GM23248 (cell line): ENCODE measurements at regions of chr14 and their contacts with region 1.

Region 1: GRCh38 chr14:51219473-51220448 is 20.3 kb upstream of the TMX1 start:
- DNase-seq: peak; percentile 70
- H3K4me3 ChIP-seq: no peak overlapping the region
- H3K27ac ChIP-seq: no peak overlapping the region
- H3K4me1 ChIP-seq: peaks cover 8% of the 10 kb centered on the region
- H3K27me3 ChIP-seq: 0 out of 2 replicates have a peak, but pooled peaks cover 7% of the 10 kb centered on the region

Region 2: GRCh38 chr14:50619556-50620141 is 600.1 kb before region 1 on chr14:
- in situ Hi-C with region 1: loop called (anchors 25 kb)
- DNase-seq: peak; percentile 60
- H3K4me3 ChIP-seq: no peak overlapping the region
- H3K27ac ChIP-seq: no peak overlapping the region
- H3K4me1 ChIP-seq: no peaks in the 10 kb centered on the region
- H3K27me3 ChIP-seq: no peaks in the 10 kb centered on the region

Region 3: DNA sequence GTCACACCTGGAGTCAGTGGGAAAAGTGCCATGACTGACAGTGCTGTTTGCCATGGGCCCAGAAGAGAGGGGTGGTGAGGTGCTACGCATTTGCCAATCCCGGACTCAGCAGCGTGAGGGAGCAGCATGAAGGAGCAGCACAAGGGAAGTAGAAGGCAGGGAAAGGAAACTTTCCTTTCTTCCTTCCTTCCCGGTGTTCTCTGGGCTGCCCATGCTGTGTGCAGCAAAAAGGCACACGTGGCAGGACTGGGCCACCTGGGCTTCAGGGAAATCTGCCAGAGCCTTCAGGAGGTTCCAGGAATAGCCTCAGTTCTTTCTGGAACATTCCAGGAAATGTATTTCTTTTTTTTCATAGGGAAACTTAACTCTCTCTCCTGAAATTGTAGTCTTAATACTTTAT is 147.9 kb before region 1 on chr14:
- in situ Hi-C with region 1: no loop called
- DNase-seq: no peak
- H3K4me3 ChIP-seq: no peak overlapping the region
- H3K27ac ChIP-seq: no peak overlapping the region
- H3K4me1 ChIP-seq: peaks cover 6% of the 10 kb centered on the region; the same call in 1 of the 2 replicates
- H3K27me3 ChIP-seq: peaks cover 8% of the 10 kb centered on the region; the same call in 1 of the 2 replicates

Region 4: GRCh38 chr14:51328064-51328771 is 108.5 kb after region 1 on chr14:
- in situ Hi-C with region 1: no loop called
- DNase-seq: peak; percentile 82
- H3K4me3 ChIP-seq: peak overlapping the region; percentile 28; the same call in 1 of the 2 replicates
- H3K27ac ChIP-seq: peak overlapping the region; percentile 74
- H3K4me1 ChIP-seq: peaks cover 25% of the 10 kb centered on the region
- H3K27me3 ChIP-seq: no peaks in the 10 kb centered on the region

Region 5: DNA sequence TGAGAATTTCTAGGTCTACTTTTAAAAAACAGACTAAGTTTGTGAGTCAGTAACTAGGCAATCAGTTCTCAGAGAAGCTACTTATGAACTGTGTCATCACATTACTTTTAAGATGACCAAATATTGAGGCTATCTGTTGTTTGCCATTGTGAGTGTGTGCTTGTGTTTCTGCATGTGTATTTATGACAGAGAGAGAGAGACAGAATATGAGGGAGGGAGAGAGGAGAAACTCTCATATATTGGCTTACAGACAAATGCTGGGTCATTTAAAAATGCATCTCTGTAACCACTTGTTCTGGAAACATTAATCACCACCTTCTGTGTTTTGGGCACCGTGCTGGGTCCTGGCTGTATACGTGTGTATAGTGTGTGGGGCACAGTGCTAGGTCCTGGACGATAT is 270.4 kb after region 1 on chr14:
- in situ Hi-C with region 1: no loop called
- DNase-seq: peak; percentile 86
- H3K4me3 ChIP-seq: no peak overlapping the region
- H3K27ac ChIP-seq: peak overlapping the region; percentile 67
- H3K4me1 ChIP-seq: peaks cover 31% of the 10 kb centered on the region
- H3K27me3 ChIP-seq: no peaks in the 10 kb centered on the region